A673 (cell line): ENCODE measurements at regions of chr7 and their contacts with region 1.

Region 1: DNA sequence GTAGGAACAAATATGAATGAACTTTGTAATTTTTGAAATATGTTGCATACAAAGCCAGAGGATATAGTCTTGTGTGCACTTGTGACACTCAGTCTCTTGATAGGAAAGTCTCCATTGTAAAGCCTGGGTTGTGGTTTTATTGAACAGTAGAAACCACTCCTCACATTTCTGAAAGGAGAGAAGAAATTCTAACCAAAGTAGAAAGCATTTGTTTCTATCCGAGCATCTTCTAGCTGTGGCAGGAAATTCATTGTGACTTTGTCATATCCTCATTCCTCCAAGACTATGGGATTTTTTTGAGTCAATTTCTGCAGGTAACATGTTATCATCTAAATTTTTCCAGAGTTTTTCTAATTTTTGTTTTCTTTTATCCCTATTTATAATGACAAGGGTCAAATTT is 55.5 kb upstream of the NCF1 start:
- DNase-seq: no peak
- H3K4me3 ChIP-seq: no peak overlapping the region
- H3K27ac ChIP-seq: no peak overlapping the region
- H3K4me1 ChIP-seq: no peaks in the 10 kb centered on the region
- H3K27me3 ChIP-seq: no peaks in the 10 kb centered on the region
- CTCF ChIP-seq: no peak

Region 2: GRCh38 chr7:74684921-74685320 is 33.4 kb before region 1 on chr7:
- CTCF ChIA-PET with region 1: no interaction called
- POLR2A ChIA-PET with region 1: no interaction called
- intact Hi-C with region 1: loop called (anchors 5 kb)
- DNase-seq: no peak
- H3K4me3 ChIP-seq: no peak overlapping the region
- H3K27ac ChIP-seq: no peak overlapping the region
- H3K4me1 ChIP-seq: no peaks in the 10 kb centered on the region
- H3K27me3 ChIP-seq: no peaks in the 10 kb centered on the region
- CTCF ChIP-seq: no peak